ENCODE measurements at regions of chr13 and their contacts with region 1.

Region 1: GRCh38 chr13:90867336-90867683 is 480.2 kb upstream of the MIR17HG start:
- DNase-seq: peak; percentile 58 to 82 (median 62)
- ATAC-seq: peak; percentile 95
- H3K4me3 ChIP-seq: no peak overlapping the region
- H3K27ac ChIP-seq: no peak overlapping the region
- H3K4me1 ChIP-seq: no peaks in the 10 kb centered on the region
- H3K27me3 ChIP-seq: no peaks in the 10 kb centered on the region
- CTCF ChIP-seq: peak in 1 of 3 experiments; percentile 91; a peak in 2 of 6 replicates
- EP300 ChIP-seq: no peak
- POLR2A ChIP-seq: no peak
- RAD21 ChIP-seq: peak in 1 of 2 experiments; percentile 88; a peak in 2 of 4 replicates

Region 2: GRCh38 chr13:89812856-89813255 is 1054.5 kb before region 1 on chr13:
- CTCF ChIA-PET with region 1: no interaction called
- POLR2A ChIA-PET with region 1: no interaction called
- in situ Hi-C with region 1: no loop called
- intact Hi-C with region 1: loop called (anchors 10 kb)
- DNase-seq: no peak
- ATAC-seq: no peak
- H3K4me3 ChIP-seq: no peak overlapping the region
- H3K27ac ChIP-seq: no peak overlapping the region
- H3K4me1 ChIP-seq: no peaks in the 10 kb centered on the region
- H3K27me3 ChIP-seq: no peaks in the 10 kb centered on the region
- CTCF ChIP-seq: no peak
- EP300 ChIP-seq: no peak
- POLR2A ChIP-seq: no peak
- RAD21 ChIP-seq: no peak

Region 3: DNA sequence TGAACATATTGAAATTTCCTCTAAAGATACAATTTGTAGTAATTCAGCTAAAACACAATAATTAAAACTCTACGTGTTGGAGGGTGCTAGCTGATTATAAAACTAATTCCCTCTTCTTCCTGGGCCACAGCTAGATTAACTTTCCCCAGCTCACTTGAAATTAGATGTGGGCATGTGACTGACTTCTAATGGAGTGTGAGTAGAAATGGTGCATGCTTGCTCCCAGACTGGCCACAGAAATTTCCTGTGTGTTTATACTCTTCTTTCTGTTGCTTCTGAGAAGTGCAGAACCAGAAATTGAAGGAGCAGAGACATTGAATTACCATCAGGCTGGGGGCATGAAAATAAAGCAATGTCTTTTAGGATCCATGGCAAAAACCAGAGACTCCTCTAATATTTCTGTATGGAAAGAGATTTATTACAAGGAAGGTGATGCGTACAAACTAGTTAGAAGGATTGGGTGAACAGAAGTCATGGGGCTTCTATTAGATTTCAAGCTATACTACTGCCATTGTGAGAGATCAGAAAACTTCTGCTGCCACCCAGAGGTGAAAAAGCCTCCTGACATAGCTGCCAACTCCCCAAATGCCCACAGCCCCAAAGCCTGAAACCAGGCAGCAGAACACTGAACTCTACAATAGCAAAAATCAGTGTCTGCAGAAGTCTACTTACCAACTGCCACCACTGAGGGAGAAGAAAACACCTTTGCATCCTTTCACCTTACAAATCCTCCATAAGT is 101.0 kb after region 1 on chr13:
- CTCF ChIA-PET with region 1: no interaction called
- POLR2A ChIA-PET with region 1: no interaction called
- in situ Hi-C with region 1: no loop called
- intact Hi-C with region 1: no loop called
- DNase-seq: peak in 1 of 4 experiments; percentile 19
- ATAC-seq: peak; percentile 45; the same call in 1 of the 3 replicates
- H3K4me3 ChIP-seq: no peak overlapping the region
- H3K27ac ChIP-seq: no peak overlapping the region
- H3K4me1 ChIP-seq: no peaks in the 10 kb centered on the region
- H3K27me3 ChIP-seq: no peaks in the 10 kb centered on the region
- CTCF ChIP-seq: peak in 2 of 3 experiments; percentile 38 to 47; a peak in 2 of 6 replicates
- EP300 ChIP-seq: no peak
- POLR2A ChIP-seq: no peak
- RAD21 ChIP-seq: peak in 1 of 2 experiments; percentile 54; a peak in 2 of 4 replicates

Region 4: GRCh38 chr13:92694047-92694446 is 1826.7 kb after region 1 on chr13:
- CTCF ChIA-PET with region 1: no interaction called
- POLR2A ChIA-PET with region 1: no interaction called
- in situ Hi-C with region 1: no loop called
- intact Hi-C with region 1: loop called (anchors 10 kb)
- DNase-seq: no peak
- ATAC-seq: peak; percentile 25; the same call in 2 of the 3 replicates
- H3K4me3 ChIP-seq: no peak overlapping the region
- H3K27ac ChIP-seq: no peak overlapping the region
- H3K4me1 ChIP-seq: no peaks in the 10 kb centered on the region
- H3K27me3 ChIP-seq: no peaks in the 10 kb centered on the region
- CTCF ChIP-seq: no peak
- EP300 ChIP-seq: no peak
- POLR2A ChIP-seq: no peak
- RAD21 ChIP-seq: no peak